WTC11 (cell line): ENCODE measurements at regions of chr9 and their contacts with region 1.

Region 1: DNA sequence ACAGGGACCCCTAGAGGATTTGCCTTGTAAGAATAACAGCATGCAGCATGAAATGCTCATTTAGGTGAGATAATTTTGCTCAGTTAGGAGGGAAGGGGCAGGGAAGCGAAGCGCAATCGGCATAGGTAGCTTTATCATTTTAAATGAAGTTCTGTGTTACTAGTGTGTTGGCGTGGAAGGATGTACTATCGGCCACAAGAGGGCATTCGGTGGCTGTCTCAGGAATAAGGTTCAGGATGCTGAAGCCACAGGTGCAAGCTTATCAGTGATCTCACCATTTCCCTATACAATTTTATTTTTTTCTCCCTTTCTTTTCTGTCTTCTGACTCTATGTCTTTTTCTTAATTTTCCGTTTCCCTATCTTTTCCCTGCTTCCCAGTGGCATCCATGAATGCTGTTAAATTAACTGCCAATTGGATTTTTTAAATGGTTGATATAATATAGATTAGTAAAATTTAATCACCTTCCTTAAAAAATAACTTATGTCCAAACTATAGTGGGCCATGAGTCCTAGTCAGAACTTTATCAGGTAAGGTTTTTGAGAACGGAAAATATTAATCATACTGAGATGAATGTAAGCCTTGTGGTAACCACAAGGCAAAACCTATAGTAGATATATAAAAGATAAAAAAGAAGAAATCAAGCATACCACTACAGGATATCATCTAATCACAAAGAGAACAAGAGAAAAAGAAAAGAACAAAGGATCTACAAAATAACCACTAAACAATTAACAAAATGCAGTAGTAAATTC is 1.2 kb upstream of the INSL6 start:
- DNase-seq: peak; percentile 56
- ATAC-seq: peak; percentile 88
- H3K4me3 Mint-ChIP-seq: no peak overlapping the region
- H3K27ac Mint-ChIP-seq: no peak overlapping the region
- H3K4me1 Mint-ChIP-seq: peaks cover 11% of the 10 kb centered on the region
- H3K27me3 Mint-ChIP-seq: no peaks in the 10 kb centered on the region; the same call in 1 of the 2 replicates
- CTCF ChIP-seq: peak; percentile 63

Region 2: GRCh38 chr9:4970970-4971641 is 215.5 kb before region 1 on chr9:
- CTCF ChIA-PET with region 1: no interaction called
- POLR2A ChIA-PET with region 1: no interaction called
- DNase-seq: no peak
- ATAC-seq: no peak
- H3K4me3 Mint-ChIP-seq: no peak overlapping the region
- H3K27ac Mint-ChIP-seq: no peak overlapping the region
- H3K4me1 Mint-ChIP-seq: peaks cover 4% of the 10 kb centered on the region; the same call in 1 of the 2 replicates
- H3K27me3 Mint-ChIP-seq: no peaks in the 10 kb centered on the region
- CTCF ChIP-seq: no peak

Region 3: GRCh38 chr9:5263351-5264218 is 77.0 kb after region 1 on chr9:
- CTCF ChIA-PET with region 1: interaction called, 12 read pairs
- POLR2A ChIA-PET with region 1: no interaction called
- DNase-seq: no peak
- ATAC-seq: peak; percentile 73
- H3K4me3 Mint-ChIP-seq: no peak overlapping the region
- H3K27ac Mint-ChIP-seq: no peak overlapping the region
- H3K4me1 Mint-ChIP-seq: peaks cover 9% of the 10 kb centered on the region
- H3K27me3 Mint-ChIP-seq: no peaks in the 10 kb centered on the region
- CTCF ChIP-seq: no peak

Region 4: GRCh38 chr9:5321058-5321457 is 134.5 kb after region 1 on chr9:
- CTCF ChIA-PET with region 1: interaction called, 14 read pairs
- POLR2A ChIA-PET with region 1: no interaction called
- DNase-seq: no peak
- ATAC-seq: no peak
- H3K4me3 Mint-ChIP-seq: no peak overlapping the region
- H3K27ac Mint-ChIP-seq: no peak overlapping the region
- H3K4me1 Mint-ChIP-seq: no peaks in the 10 kb centered on the region
- H3K27me3 Mint-ChIP-seq: no peaks in the 10 kb centered on the region
- CTCF ChIP-seq: no peak

Region 5: GRCh38 chr9:5425006-5425628 is 238.5 kb after region 1 on chr9:
- CTCF ChIA-PET with region 1: interaction called, 17 read pairs
- POLR2A ChIA-PET with region 1: no interaction called
- DNase-seq: no peak
- ATAC-seq: peak; percentile 63
- H3K4me3 Mint-ChIP-seq: no peak overlapping the region
- H3K27ac Mint-ChIP-seq: no peak overlapping the region
- H3K4me1 Mint-ChIP-seq: no peaks in the 10 kb centered on the region
- H3K27me3 Mint-ChIP-seq: no peaks in the 10 kb centered on the region
- CTCF ChIP-seq: peak; percentile 58

Region 6: DNA sequence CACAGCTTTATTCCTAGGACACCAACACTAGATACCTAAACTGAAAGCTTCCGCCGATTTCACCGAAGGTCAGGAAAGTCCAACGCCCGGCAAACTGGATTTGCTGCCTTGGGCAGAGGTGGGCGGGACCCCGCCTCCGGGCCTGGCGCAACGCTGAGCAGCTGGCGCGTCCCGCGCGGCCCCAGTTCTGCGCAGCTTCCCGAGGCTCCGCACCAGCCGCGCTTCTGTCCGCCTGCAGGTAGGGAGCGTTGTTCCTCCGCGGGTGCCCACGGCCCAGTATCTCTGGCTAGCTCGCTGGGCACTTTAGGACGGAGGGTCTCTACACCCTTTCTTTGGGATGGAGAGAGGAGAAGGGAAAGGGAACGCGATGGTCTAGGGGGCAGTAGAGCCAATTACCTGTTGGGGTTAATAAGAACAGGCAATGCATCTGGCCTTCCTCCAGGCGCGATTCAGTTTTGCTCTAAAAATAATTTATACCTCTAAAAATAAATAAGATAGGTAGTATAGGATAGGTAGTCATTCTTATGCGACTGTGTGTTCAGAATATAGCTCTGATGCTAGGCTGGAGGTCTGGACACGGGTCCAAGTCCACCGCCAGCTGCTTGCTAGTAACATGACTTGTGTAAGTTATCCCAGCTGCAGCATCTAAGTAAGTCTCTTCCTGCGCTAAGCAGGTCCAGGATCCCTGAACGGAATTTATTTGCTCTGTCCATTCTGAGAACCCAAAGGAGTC is 263.9 kb after region 1 on chr9 and contains the start of gene CD274:
- CTCF ChIA-PET with region 1: interaction called, 14 read pairs
- POLR2A ChIA-PET with region 1: no interaction called
- DNase-seq: peak; percentile 90
- ATAC-seq: peak; percentile 100
- H3K4me3 Mint-ChIP-seq: peak within 1 kb of the TSS; percentile 71
- H3K27ac Mint-ChIP-seq: no peak within 1 kb of the TSS
- H3K4me1 Mint-ChIP-seq: peaks cover 3% of the 10 kb centered on the region; the same call in 1 of the 2 replicates
- H3K27me3 Mint-ChIP-seq: 0 out of 2 replicates have a peak, but pooled peaks cover 3% of the 10 kb centered on the region
- CTCF ChIP-seq: no peak
- total RNA-seq, gene CD274: 0.05 to 0.42 TPM (median 0.21 TPM) in 3 replicates